ENCODE measurements at regions of chr3 and their contacts with region 1.

Region 1: GRCh38 chr3:81846988-81847387 is 85.5 kb upstream of the GBE1 start:
- DNase-seq: no peak
- H3K4me3 Mint-ChIP-seq: no peak overlapping the region
- H3K27ac Mint-ChIP-seq: no peak overlapping the region
- H3K4me1 Mint-ChIP-seq: no peaks in the 10 kb centered on the region
- H3K27me3 Mint-ChIP-seq: no peaks in the 10 kb centered on the region

Region 2: GRCh38 chr3:81741216-81741615 is 105.8 kb before region 1 on chr3:
- CTCF ChIA-PET with region 1: no interaction called
- intact Hi-C with region 1: no loop called
- DNase-seq: no peak
- H3K4me3 Mint-ChIP-seq: no peak overlapping the region
- H3K27ac Mint-ChIP-seq: no peak overlapping the region
- H3K4me1 Mint-ChIP-seq: peaks cover 5% of the 10 kb centered on the region
- H3K27me3 Mint-ChIP-seq: no peaks in the 10 kb centered on the region

Region 3: DNA sequence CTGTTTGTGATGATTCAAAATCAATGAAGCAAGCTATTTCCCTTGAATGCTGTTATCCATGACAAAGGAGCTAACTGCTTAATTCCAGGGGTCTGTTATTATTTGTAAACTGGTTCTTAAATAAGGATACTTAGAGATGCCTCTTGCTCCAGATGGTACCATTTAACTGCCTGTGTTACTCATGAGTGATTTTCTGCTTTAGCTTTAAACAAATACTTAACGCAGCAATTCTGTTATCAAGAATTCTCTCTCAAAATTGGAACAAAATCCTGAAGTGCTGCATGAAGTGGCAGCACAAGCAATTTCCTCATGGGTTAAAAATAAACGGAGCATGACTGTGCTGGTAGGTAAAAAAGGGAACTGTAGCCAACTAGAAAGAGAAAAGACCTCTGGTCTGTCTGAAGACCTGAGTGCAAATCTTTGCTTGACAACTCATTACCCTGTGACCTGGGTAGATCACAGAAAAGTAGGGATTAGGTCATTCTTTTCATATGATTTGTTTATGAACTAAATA is 23.0 kb before region 1 on chr3:
- CTCF ChIA-PET with region 1: no interaction called
- intact Hi-C with region 1: loop called (anchors 1 kb)
- DNase-seq: no peak
- H3K4me3 Mint-ChIP-seq: no peak overlapping the region
- H3K27ac Mint-ChIP-seq: no peak overlapping the region
- H3K4me1 Mint-ChIP-seq: no peaks in the 10 kb centered on the region
- H3K27me3 Mint-ChIP-seq: peaks cover 6% of the 10 kb centered on the region